Naive thymus-derived CD4-positive, alpha-beta T cell (primary cell): ENCODE measurements at regions of chrX and their contacts with region 1.

Region 1: GRCh38 chrX:111680988-111681779 is at the start of gene ALG13:
- DNase-seq: peak; percentile 70 to 94 (median 89)
- ATAC-seq: peak; percentile 93
- H3K4me3 ChIP-seq: peak within 1 kb of the TSS; percentile 57
- H3K4me3 Mint-ChIP-seq: peak within 1 kb of the TSS; percentile 87 to 94 (median 89)
- H3K27ac ChIP-seq: peak within 1 kb of the TSS; percentile 98
- H3K27ac Mint-ChIP-seq: peak within 1 kb of the TSS; percentile 92 to 99 (median 98)
- H3K4me1 ChIP-seq: peaks cover 7 to 15% of the 10 kb centered on the region in 2 donors
- H3K4me1 Mint-ChIP-seq: peaks cover 14 to 44% (median 32%) of the 10 kb centered on the region in 7 donors
- H3K27me3 ChIP-seq: no peaks in the 10 kb centered on the region
- H3K27me3 Mint-ChIP-seq: no peaks in the 10 kb centered on the region
- total RNA-seq, gene ALG13: 48.4 to 223 (median 92.3) TPM

Region 2: GRCh38 chrX:110002300-110003166 is 1678.7 kb before region 1 on chrX and contains the start of gene TMEM164:
- CTCF ChIA-PET with region 1: no interaction called
- POLR2A ChIA-PET with region 1: no interaction called
- intact Hi-C with region 1: loop called (anchors 2 to 10 kb)
- DNase-seq: peak; percentile 58 to 82 (median 75)
- ATAC-seq: peak; percentile 87
- H3K4me3 ChIP-seq: peak within 1 kb of the TSS; percentile 54
- H3K4me3 Mint-ChIP-seq: peak within 1 kb of the TSS; percentile 76 to 96 (median 88)
- H3K27ac ChIP-seq: peak within 1 kb of the TSS; percentile 64
- H3K27ac Mint-ChIP-seq: peak within 1 kb of the TSS; percentile 82 to 95 (median 88)
- H3K4me1 ChIP-seq: no peaks in the 10 kb centered on the region
- H3K4me1 Mint-ChIP-seq: peaks cover 14 to 42% (median 34%) of the 10 kb centered on the region in 7 donors
- H3K27me3 ChIP-seq: no peaks in the 10 kb centered on the region
- H3K27me3 Mint-ChIP-seq: no peaks in the 10 kb centered on the region
- total RNA-seq, gene TMEM164: 16.3 to 30.1 (median 17.9) TPM

Region 3: GRCh38 chrX:111662292-111662691 is 18.9 kb before region 1 on chrX:
- CTCF ChIA-PET with region 1: no interaction called
- POLR2A ChIA-PET with region 1: no interaction called
- intact Hi-C with region 1: no loop called
- DNase-seq: no peak
- ATAC-seq: no peak
- H3K4me3 ChIP-seq: no peak overlapping the region
- H3K4me3 Mint-ChIP-seq: no peak overlapping the region
- H3K27ac ChIP-seq: no peak overlapping the region
- H3K27ac Mint-ChIP-seq: no peak overlapping the region
- H3K4me1 ChIP-seq: no peaks in the 10 kb centered on the region
- H3K4me1 Mint-ChIP-seq: no peaks in the 10 kb centered on the region
- H3K27me3 ChIP-seq: no peaks in the 10 kb centered on the region
- H3K27me3 Mint-ChIP-seq: no peaks in the 10 kb centered on the region

Region 4: DNA sequence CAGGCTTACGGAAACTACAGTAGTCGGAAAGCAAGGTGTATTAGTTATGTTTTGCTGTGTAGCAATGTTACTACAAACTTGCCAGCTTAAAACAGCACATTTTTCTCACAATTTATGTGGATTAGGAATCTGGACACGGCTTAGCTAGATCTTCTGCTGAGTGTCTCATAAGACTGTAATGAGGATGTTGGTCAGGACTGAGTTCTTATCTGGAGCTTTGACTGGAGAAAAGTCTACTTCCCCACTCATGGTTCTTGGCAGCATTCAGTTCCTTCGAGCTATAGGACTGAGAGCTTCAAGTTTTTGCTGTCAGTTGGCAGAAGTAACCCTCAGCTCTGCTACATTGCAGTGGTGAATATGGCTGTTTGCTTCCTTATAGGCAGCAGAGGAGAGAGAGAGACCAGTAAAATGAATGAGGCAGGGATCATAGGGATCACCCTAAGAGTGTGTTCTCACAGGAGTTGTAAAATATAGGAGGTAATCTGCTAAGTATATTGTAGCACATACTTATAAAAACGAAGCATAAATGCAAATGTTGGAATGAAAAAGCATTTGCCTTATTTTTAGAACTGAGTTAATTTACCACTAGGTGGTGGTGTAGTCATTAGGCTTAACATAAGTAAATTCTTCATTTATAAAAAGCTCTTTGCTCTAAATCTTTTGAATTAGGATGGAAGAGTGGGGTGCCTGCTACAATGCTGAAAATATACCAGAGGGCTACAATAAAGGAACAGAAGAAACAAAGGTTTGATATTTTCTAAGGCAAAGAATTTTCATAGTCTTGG is 38.4 kb after region 1 on chrX:
- CTCF ChIA-PET with region 1: no interaction called
- POLR2A ChIA-PET with region 1: interaction called, 3 read pairs
- intact Hi-C with region 1: loop called in 1 of 2 experiments (anchors 5 kb)
- DNase-seq: no peak
- ATAC-seq: no peak
- H3K4me3 ChIP-seq: no peak overlapping the region
- H3K4me3 Mint-ChIP-seq: no peak overlapping the region
- H3K27ac ChIP-seq: no peak overlapping the region
- H3K27ac Mint-ChIP-seq: peak overlapping the region in 1 of 9 donors; percentile 90
- H3K4me1 ChIP-seq: no peaks in the 10 kb centered on the region
- H3K4me1 Mint-ChIP-seq: peaks cover 0 to 5% (median 0%) of the 10 kb centered on the region in 7 donors
- H3K27me3 ChIP-seq: no peaks in the 10 kb centered on the region
- H3K27me3 Mint-ChIP-seq: no peaks in the 10 kb centered on the region

Region 5: DNA sequence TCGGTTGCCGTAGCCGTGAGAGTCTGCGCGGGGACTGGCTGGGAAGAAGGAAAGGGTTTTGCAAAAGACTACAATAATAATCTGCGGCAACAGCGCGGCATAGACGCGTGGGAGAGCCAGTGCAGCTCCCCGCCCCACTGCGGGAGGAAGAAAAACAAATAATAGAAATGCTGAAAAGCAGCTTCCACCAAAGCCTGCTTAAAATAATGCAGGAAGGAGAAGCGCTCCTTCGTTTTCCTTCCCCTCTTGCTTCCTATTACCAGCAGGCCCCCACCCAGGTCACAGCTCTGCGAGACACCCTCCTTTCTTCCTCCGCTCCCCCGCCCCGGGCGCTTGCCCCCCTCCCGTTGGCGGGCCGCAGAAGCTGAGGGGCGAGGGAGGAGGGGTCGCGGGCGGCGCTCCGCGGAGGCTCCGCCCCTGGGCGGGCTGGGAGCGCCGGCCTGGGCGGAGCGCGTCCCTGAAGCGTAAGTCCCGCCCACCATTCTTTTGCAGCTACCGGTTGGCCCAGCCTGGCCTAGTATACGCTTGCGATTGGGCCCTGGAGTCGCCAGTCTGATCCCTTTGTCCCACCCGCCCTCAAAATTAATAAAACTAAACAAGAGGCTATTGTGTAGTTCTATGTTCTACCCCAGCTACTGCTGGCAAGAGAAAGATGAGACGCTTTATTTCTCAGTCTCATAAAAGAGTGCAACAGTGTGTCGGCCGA is 1160.1 kb after region 1 on chrX:
- CTCF ChIA-PET with region 1: no interaction called
- POLR2A ChIA-PET with region 1: no interaction called
- intact Hi-C with region 1: loop called (anchors 1 to 2 kb)
- DNase-seq: peak; percentile 55 to 82 (median 75)
- ATAC-seq: peak; percentile 98
- H3K4me3 ChIP-seq: peak overlapping the region; percentile 74
- H3K4me3 Mint-ChIP-seq: peak overlapping the region; percentile 81 to 94 (median 88)
- H3K27ac ChIP-seq: peak overlapping the region; percentile 66
- H3K27ac Mint-ChIP-seq: peak overlapping the region; percentile 51 to 92 (median 79)
- H3K4me1 ChIP-seq: peaks cover 0 to 6% of the 10 kb centered on the region in 2 donors
- H3K4me1 Mint-ChIP-seq: peaks cover 0 to 23% (median 7%) of the 10 kb centered on the region in 7 donors
- H3K27me3 ChIP-seq: no peaks in the 10 kb centered on the region
- H3K27me3 Mint-ChIP-seq: peaks cover 0 to 7% (median 0%) of the 10 kb centered on the region in 5 donors